A549 (cell line): ENCODE measurements at regions of chr3 and their contacts with region 1.

Region 1: GRCh38 chr3:183766745-183767606 is 58.4 kb downstream of the MAP6D1 start:
- DNase-seq: peak; percentile 67 to 72
- ATAC-seq: peak; percentile 98
- H3K4me3 ChIP-seq: no peak overlapping the region
- H3K27ac ChIP-seq: peak overlapping the region in 1 of 2 experiments; percentile 43; a peak in 1 of 6 replicates
- H3K4me1 ChIP-seq: peaks cover 4% of the 10 kb centered on the region; the same call in 1 of the 3 replicates
- CTCF ChIP-seq: peak; percentile 70
- EP300 ChIP-seq: no peak
- POLR2A ChIP-seq: no peak
- RAD21 ChIP-seq: peak; percentile 81 to 83

Region 2: DNA sequence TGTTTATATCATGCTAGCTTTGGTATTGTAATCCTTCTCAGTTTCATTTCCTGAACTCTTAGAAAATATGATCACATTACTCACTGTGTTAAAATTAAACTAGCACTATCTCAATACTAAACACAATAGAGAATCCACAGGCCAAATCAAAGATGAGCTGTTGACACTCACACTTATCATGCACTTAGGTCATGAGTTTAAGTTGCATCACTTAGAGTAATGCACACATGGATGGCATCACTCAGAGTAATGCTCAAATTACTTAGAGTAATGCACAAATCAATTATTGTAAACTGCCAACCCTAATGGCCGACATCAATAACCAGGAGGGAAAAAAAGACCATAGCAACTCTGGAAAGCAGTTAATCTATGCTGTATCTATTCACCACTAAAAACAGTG is 298.6 kb before region 1 on chr3:
- CTCF ChIA-PET with region 1: interaction called, 15 read pairs
- POLR2A ChIA-PET with region 1: no interaction called
- DNase-seq: no peak
- ATAC-seq: no peak
- H3K4me3 ChIP-seq: no peak overlapping the region
- H3K27ac ChIP-seq: no peak overlapping the region
- H3K4me1 ChIP-seq: 0 out of 3 replicates have a peak, but pooled peaks cover 3% of the 10 kb centered on the region
- CTCF ChIP-seq: no peak
- EP300 ChIP-seq: no peak
- POLR2A ChIP-seq: no peak
- RAD21 ChIP-seq: no peak

Region 3: DNA sequence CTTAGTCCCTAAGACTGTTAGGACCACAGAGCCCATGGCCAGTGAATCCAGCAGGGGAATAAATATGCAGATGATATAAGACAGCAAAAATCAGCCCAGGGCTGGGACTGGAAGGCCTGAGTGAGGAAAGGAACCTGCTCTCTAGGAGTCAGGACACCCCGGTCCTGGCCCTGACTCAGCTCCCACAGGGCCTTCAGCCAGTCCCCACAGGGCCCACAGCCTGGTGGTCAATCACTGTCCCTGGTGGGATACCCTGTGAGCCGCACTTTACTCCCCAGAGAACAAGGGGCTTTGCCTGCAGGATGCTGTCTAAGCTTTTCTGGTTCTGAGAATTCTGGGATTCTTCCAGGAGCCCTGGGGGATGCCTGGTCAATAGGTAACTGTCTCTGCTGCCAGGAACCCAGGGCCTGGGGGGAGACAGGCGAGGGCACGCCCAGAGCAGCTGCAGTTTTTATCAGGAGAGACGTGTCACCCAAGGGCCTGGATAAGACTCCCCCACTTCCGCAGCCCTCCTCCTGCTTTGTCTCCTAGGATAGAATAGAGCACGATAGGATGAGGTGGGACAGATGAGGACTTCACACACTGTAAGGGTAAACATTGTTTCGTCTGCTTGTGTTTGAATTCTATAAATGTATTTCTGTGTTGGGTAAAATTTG is 289.0 kb before region 1 on chr3:
- CTCF ChIA-PET with region 1: interaction called, 12 read pairs
- POLR2A ChIA-PET with region 1: no interaction called
- DNase-seq: no peak
- ATAC-seq: no peak
- H3K4me3 ChIP-seq: no peak overlapping the region
- H3K27ac ChIP-seq: no peak overlapping the region
- H3K4me1 ChIP-seq: no peaks in the 10 kb centered on the region
- CTCF ChIP-seq: no peak
- EP300 ChIP-seq: no peak
- POLR2A ChIP-seq: no peak
- RAD21 ChIP-seq: no peak

Region 4: DNA sequence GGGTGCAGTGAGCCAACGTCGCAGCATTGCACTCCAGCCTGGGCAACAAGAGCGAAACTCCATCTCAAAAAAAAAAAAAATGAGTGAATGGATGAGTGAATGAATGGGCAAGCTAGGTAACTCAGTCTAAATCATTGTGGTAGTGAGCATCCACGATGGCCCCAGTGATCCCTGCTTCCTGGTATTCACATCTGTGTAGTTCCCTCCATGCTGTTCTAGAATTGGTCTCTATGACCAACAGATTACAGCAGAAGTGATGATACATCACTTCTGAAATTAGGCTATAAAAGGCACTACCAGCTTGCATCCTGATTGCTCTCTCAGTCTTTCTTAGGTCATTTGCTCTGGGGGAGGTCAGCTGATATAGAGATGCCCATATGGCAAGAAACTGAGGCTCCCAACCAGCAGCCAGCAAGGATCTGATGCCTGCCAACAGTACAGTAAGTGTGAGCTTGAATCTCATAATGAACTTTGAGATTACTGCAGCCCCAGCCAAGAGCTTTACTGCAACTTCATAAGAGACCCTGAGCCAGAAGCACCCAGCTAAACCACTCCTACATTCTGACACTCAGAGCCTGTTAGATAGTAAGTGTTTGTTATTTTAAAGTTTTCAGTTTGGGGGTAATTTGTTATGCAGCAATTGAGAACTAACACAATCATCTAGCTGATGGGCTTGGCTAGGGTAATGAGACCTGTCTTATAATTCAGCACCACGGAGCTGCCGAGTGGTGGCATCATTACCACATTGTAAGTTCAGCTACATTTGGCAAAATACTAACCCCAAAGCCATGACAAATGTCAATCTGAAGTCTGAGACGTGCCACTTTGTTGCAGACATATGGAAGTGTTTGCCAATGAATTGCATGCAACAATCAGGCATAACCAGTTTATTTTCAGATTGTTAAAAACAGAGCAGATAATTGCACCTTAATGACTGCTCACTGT is 264.5 kb before region 1 on chr3:
- CTCF ChIA-PET with region 1: interaction called, 31 read pairs
- POLR2A ChIA-PET with region 1: no interaction called
- DNase-seq: peak in 1 of 2 experiments; percentile 14
- ATAC-seq: peak; percentile 66 to 73; a peak in 5 of 6 replicates
- H3K4me3 ChIP-seq: no peak overlapping the region
- H3K27ac ChIP-seq: no peak overlapping the region
- H3K4me1 ChIP-seq: no peaks in the 10 kb centered on the region
- CTCF ChIP-seq: peak; percentile 38; the same call in 2 of the 3 replicates
- EP300 ChIP-seq: no peak
- POLR2A ChIP-seq: no peak
- RAD21 ChIP-seq: peak; percentile 56 to 61

Region 5: DNA sequence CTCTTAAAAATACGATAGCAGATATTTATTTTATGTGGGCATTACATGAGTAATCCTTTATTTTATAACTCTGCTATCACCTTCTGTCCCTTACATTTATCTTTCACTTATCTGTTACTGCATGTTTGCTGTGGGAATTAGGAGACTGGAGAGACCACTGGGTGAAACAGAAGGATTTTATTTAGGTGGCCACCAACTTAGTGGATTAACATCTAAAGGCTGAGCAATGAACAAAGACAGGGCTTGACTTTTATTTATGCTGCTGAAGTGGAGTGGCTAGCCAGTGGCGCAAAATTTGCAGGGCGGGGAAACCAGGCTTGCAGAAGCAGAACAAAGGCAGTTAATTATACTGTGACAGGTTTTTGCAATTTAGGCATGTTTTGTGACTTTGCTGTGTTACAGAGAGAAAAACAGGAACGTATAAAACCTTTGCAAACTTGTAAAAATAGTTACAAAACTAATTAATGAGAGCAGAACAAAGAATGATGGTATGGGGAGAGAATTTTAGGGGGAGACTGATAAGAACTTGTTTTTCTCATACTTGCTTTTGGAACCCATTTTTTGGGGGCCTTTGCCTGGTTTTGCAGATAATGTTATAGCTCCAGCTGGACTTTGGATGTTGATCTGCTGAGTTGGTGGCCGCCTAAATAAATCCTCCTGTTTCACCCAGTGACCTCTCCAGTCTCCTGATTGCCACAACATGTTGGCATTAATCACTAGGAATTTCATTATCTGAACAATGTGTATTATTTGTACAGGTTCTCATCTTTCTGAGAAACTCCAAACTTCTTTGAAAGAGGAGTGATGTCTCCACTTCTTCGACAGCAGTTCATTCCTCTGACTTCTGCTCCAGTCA is 113.5 kb before region 1 on chr3:
- CTCF ChIA-PET with region 1: no interaction called
- POLR2A ChIA-PET with region 1: no interaction called
- DNase-seq: peak in 1 of 2 experiments; percentile 23
- ATAC-seq: no peak
- H3K4me3 ChIP-seq: no peak overlapping the region
- H3K27ac ChIP-seq: no peak overlapping the region
- H3K4me1 ChIP-seq: no peaks in the 10 kb centered on the region
- CTCF ChIP-seq: no peak
- EP300 ChIP-seq: no peak
- POLR2A ChIP-seq: no peak
- RAD21 ChIP-seq: no peak

Region 6: DNA sequence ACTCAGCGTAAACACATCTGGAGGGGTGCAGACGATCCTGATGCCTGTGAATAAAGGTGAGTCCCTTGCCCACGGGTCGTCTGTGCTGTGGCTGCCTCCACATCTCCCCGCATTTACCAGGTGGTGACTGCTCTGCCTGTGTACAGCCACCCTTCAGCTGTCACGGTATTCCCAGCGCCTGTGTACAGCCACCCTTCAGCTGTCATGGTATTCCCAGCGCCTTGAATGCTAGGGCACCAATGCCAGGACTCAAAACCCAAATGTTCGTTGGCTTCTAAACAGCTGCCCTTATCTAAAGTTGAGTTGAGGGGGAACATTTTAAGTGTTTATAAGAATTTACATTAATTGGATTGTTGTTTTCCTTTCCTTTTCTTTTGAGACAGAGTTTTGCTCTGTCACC is 31.0 kb after region 1 on chr3:
- CTCF ChIA-PET with region 1: no interaction called
- POLR2A ChIA-PET with region 1: no interaction called
- DNase-seq: no peak
- ATAC-seq: no peak
- H3K4me3 ChIP-seq: no peak overlapping the region
- H3K27ac ChIP-seq: no peak overlapping the region
- H3K4me1 ChIP-seq: no peaks in the 10 kb centered on the region
- CTCF ChIP-seq: no peak
- EP300 ChIP-seq: no peak
- POLR2A ChIP-seq: no peak
- RAD21 ChIP-seq: no peak